Naive thymus-derived CD4-positive, alpha-beta T cell (primary cell): ENCODE measurements at regions of chr7 and their contacts with region 1.

Region 1: GRCh38 chr7:111012799-111013675 is 77.9 kb upstream of the LRRN3 start:
- DNase-seq: peak in 8 of 9 donors; percentile 44 to 76 (median 70)
- ATAC-seq: peak; percentile 86
- H3K4me3 ChIP-seq: peak overlapping the region; percentile 50
- H3K4me3 Mint-ChIP-seq: peak overlapping the region in 9 of 10 donors; percentile 59 to 83 (median 76)
- H3K27ac ChIP-seq: peak overlapping the region; percentile 82
- H3K27ac Mint-ChIP-seq: peak overlapping the region in 6 of 9 donors; percentile 84 to 96 (median 90)
- H3K4me1 ChIP-seq: peaks cover 13 to 77% of the 10 kb centered on the region in 2 donors
- H3K4me1 Mint-ChIP-seq: peaks cover 38 to 76% (median 48%) of the 10 kb centered on the region in 7 donors
- H3K27me3 ChIP-seq: no peaks in the 10 kb centered on the region
- H3K27me3 Mint-ChIP-seq: no peaks in the 10 kb centered on the region

Region 2: GRCh38 chr7:110835218-110835617 is 177.8 kb before region 1 on chr7:
- CTCF ChIA-PET with region 1: no interaction called
- POLR2A ChIA-PET with region 1: no interaction called
- intact Hi-C with region 1: no loop called
- DNase-seq: peak in 6 of 9 donors; percentile 10 to 50 (median 38)
- ATAC-seq: peak; percentile 36
- H3K4me3 ChIP-seq: no peak overlapping the region
- H3K4me3 Mint-ChIP-seq: peak overlapping the region in 4 of 10 donors; percentile 12 to 32 (median 18)
- H3K27ac ChIP-seq: no peak overlapping the region
- H3K27ac Mint-ChIP-seq: peak overlapping the region in 5 of 9 donors; percentile 21 to 75 (median 29)
- H3K4me1 ChIP-seq: peaks cover 0 to 8% of the 10 kb centered on the region in 2 donors
- H3K4me1 Mint-ChIP-seq: peaks cover 12 to 24% (median 23%) of the 10 kb centered on the region in 7 donors
- H3K27me3 ChIP-seq: no peaks in the 10 kb centered on the region
- H3K27me3 Mint-ChIP-seq: no peaks in the 10 kb centered on the region

Region 3: GRCh38 chr7:110909117-110909516 is 103.9 kb before region 1 on chr7:
- CTCF ChIA-PET with region 1: no interaction called
- POLR2A ChIA-PET with region 1: no interaction called
- intact Hi-C with region 1: loop called in 1 of 2 experiments (anchors 2 kb)
- DNase-seq: no peak
- ATAC-seq: no peak
- H3K4me3 ChIP-seq: no peak overlapping the region
- H3K4me3 Mint-ChIP-seq: peak overlapping the region in 1 of 10 donors; percentile 1
- H3K27ac ChIP-seq: no peak overlapping the region
- H3K27ac Mint-ChIP-seq: no peak overlapping the region
- H3K4me1 ChIP-seq: peaks cover 0 to 8% of the 10 kb centered on the region in 2 donors
- H3K4me1 Mint-ChIP-seq: peaks cover 0 to 50% (median 35%) of the 10 kb centered on the region in 7 donors
- H3K27me3 ChIP-seq: no peaks in the 10 kb centered on the region
- H3K27me3 Mint-ChIP-seq: no peaks in the 10 kb centered on the region

Region 4: DNA sequence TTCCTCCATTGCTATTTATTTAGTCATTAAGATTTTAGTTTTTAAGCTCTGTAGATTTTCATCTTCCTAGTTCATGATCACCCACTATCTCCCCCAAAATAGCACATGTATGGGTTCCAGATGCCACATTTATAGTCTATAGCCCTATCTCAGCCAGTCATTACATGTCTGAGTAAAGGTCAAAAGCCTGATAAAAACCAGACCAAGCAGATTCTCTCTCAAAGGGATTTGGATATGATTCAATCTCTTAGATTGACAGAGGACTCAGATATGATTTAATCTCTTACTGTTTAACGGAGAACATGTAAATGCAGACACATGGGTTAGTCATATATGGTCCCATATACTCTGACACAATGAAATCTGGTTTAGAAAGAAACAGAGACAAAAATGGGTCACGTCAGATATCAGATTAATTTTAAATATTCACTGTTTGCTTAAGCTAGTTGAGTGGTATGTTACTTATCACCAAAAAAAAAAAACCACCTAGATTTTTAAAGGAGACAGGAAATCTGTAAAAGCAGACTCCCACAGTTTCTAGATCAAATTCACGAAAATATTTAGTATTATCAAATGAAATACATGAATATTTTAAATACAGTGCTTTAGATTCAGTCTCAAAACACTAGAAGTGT is 29.1 kb before region 1 on chr7:
- CTCF ChIA-PET with region 1: no interaction called
- POLR2A ChIA-PET with region 1: no interaction called
- intact Hi-C with region 1: no loop called
- DNase-seq: no peak
- ATAC-seq: no peak
- H3K4me3 ChIP-seq: no peak overlapping the region
- H3K4me3 Mint-ChIP-seq: no peak overlapping the region
- H3K27ac ChIP-seq: no peak overlapping the region
- H3K27ac Mint-ChIP-seq: no peak overlapping the region
- H3K4me1 ChIP-seq: no peaks in the 10 kb centered on the region
- H3K4me1 Mint-ChIP-seq: peaks cover 5 to 42% (median 31%) of the 10 kb centered on the region in 7 donors
- H3K27me3 ChIP-seq: no peaks in the 10 kb centered on the region
- H3K27me3 Mint-ChIP-seq: no peaks in the 10 kb centered on the region

Region 5: DNA sequence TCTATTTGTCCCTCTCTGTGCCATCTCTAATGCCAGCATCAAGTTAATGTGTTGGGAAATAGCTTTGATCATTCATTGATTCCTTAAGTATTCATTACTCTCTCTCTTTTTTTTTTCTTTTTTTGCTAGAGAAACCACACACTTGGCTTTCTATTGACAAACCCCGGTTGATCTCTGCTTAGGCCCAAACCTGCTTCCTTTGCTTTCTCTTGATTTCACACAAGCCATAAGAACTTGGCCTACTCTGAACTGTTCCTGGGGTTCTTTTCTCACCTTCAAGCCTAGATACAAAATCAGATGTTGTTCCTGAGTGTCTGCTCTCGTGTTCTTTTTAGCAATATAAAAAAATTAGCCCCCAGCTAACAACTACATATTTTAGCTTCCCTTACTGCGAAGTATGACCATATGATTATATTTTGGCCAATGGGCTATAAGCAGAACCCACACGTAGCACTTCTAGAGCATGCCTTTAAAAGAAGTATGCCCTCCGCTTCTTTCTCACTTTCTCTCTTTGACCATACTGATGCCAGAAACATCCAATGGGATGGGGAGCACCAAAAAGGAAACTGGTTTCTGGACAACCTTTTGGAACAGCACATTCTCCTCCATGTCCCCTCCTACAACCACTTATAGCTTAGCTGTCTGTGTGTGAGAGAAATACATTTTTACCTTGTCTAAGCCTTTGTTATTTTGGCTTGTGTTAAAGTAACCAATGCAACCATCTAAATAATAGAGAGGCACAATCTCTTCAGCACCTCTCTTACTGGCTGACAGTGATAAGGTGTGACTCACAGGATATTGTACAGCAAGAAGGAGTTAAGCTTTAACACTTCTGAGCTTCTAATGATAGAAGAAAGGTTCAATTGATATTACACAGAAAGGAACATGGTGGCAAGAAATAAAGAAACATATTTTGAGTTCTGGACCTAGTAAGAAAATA is 18.7 kb before region 1 on chr7:
- CTCF ChIA-PET with region 1: interaction called, 3 read pairs
- POLR2A ChIA-PET with region 1: interaction called, 3 read pairs
- intact Hi-C with region 1: loop called (anchors 1 to 2 kb)
- DNase-seq: peak in 1 of 9 donors; percentile 37
- ATAC-seq: peak; percentile 64
- H3K4me3 ChIP-seq: no peak overlapping the region
- H3K4me3 Mint-ChIP-seq: peak overlapping the region; percentile 8 to 65 (median 54)
- H3K27ac ChIP-seq: peak overlapping the region; percentile 50
- H3K27ac Mint-ChIP-seq: peak overlapping the region; percentile 83 to 93 (median 91)
- H3K4me1 ChIP-seq: peaks cover 0 to 25% of the 10 kb centered on the region in 2 donors
- H3K4me1 Mint-ChIP-seq: peaks cover 18 to 43% (median 40%) of the 10 kb centered on the region in 7 donors
- H3K27me3 ChIP-seq: no peaks in the 10 kb centered on the region
- H3K27me3 Mint-ChIP-seq: no peaks in the 10 kb centered on the region

Region 6: GRCh38 chr7:111232249-111233084 is 219.4 kb after region 1 on chr7:
- CTCF ChIA-PET with region 1: no interaction called
- POLR2A ChIA-PET with region 1: no interaction called
- intact Hi-C with region 1: no loop called
- DNase-seq: no peak
- ATAC-seq: no peak
- H3K4me3 ChIP-seq: no peak overlapping the region
- H3K4me3 Mint-ChIP-seq: no peak overlapping the region
- H3K27ac ChIP-seq: no peak overlapping the region
- H3K27ac Mint-ChIP-seq: no peak overlapping the region
- H3K4me1 ChIP-seq: no peaks in the 10 kb centered on the region
- H3K4me1 Mint-ChIP-seq: peaks cover 0 to 9% (median 0%) of the 10 kb centered on the region in 7 donors
- H3K27me3 ChIP-seq: no peaks in the 10 kb centered on the region
- H3K27me3 Mint-ChIP-seq: no peaks in the 10 kb centered on the region

Region 7: DNA sequence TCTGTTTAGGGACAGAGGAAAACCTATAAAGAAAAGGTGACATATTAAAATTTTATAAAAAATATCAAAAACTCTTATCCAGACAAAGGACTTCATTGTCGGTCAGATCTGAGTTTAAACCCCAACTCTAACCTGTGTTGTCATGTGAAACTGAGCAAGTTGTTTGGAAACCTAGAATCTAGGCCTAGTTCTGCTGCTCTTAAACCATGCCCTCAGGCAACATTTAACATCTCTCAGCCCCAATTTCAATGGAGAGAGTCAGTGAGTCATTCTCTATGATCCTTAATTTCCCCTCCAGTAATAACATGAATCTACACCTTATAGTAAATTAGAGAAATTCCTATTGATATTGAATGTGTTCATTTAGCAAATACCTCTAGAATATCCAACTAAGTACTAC is 357.0 kb after region 1 on chr7:
- CTCF ChIA-PET with region 1: no interaction called
- POLR2A ChIA-PET with region 1: no interaction called
- intact Hi-C with region 1: no loop called
- DNase-seq: no peak
- ATAC-seq: no peak
- H3K4me3 ChIP-seq: no peak overlapping the region
- H3K4me3 Mint-ChIP-seq: no peak overlapping the region
- H3K27ac ChIP-seq: no peak overlapping the region
- H3K27ac Mint-ChIP-seq: no peak overlapping the region
- H3K4me1 ChIP-seq: no peaks in the 10 kb centered on the region
- H3K4me1 Mint-ChIP-seq: peaks cover 0 to 6% (median 0%) of the 10 kb centered on the region in 7 donors
- H3K27me3 ChIP-seq: no peaks in the 10 kb centered on the region
- H3K27me3 Mint-ChIP-seq: no peaks in the 10 kb centered on the region